ENCODE measurements at regions of chr17 and their contacts with region 1.

Region 1: GRCh38 chr17:56020369-56020768 is 132.9 kb upstream of the ANKFN1 start:
- DNase-seq: no peak
- ATAC-seq: peak; percentile 80
- H3K4me3 Mint-ChIP-seq: no peak overlapping the region
- H3K27ac Mint-ChIP-seq: peak overlapping the region; percentile 48
- H3K4me1 Mint-ChIP-seq: peaks cover 40% of the 10 kb centered on the region
- H3K27me3 Mint-ChIP-seq: peaks cover 9% of the 10 kb centered on the region

Region 2: DNA sequence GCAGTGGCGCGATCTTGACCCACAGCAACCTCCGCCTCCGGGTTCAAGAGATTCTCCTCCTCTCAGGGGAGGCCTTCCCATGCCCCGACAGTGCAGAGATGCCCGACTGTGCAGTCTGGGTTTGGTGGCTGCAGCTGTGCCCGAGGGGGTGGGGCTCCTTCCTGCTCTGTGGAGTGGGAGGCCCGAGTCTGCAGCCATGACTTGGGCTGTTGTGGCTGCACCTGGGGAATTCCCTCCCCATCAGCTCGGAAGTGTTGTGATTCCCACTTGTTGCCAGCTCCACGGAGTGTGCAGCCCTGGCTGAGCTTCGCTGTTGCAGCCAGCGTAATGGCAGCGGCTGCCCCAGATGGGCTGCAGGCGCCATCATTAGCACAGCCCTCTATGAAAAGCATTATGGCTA is 442.7 kb before region 1 on chr17:
- CTCF ChIA-PET with region 1: no interaction called
- POLR2A ChIA-PET with region 1: no interaction called
- intact Hi-C with region 1: no loop called
- DNase-seq: peak; percentile 67
- ATAC-seq: peak; percentile 16
- H3K4me3 Mint-ChIP-seq: no peak overlapping the region
- H3K27ac Mint-ChIP-seq: no peak overlapping the region
- H3K4me1 Mint-ChIP-seq: peaks cover 24% of the 10 kb centered on the region
- H3K27me3 Mint-ChIP-seq: peaks cover 7% of the 10 kb centered on the region

Region 3: DNA sequence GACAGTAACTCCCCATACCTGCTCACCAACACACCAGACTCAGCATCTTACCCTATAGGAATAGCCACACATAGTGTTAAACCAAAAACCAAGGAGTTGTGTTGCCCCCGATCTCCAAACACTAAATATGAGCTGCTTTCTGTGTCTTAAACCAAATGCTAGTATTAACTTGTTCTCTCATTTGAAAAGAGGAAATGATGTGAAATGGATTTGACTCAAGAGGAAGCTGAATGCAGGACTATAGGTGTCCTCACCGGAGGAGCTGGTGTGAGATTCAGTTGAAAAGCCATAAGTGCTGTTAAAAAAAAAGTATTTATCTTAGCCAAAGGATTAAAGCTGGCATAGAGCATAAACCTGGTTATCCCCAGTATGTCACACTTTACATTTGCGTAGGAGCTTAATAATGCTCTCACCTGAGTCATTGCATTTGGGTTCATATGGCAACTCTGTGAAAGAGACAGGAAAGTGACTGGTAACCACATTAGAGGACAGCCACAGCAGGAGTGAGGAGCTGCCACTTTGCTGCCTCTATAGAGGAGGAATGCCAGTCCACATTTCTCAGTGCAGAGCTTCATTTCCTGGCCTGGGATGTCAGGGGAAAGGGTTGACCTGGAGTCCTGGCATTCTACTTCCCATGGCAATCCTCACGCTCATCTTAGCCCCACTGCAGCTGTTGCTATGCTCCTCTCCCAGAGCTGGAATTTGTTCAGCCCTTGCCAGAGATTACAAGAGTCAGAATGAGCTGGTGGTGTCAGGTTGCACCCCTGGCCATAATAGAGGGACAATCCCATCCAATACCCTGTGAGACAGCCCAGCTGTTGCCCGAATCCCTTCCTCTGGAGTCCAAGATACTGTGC is 10.3 kb before region 1 on chr17:
- CTCF ChIA-PET with region 1: no interaction called
- POLR2A ChIA-PET with region 1: no interaction called
- intact Hi-C with region 1: loop called in 1 of 2 experiments (anchors 1 kb)
- DNase-seq: peak; percentile 30
- ATAC-seq: peak; percentile 85
- H3K4me3 Mint-ChIP-seq: no peak overlapping the region
- H3K27ac Mint-ChIP-seq: no peak overlapping the region
- H3K4me1 Mint-ChIP-seq: peaks cover 23% of the 10 kb centered on the region
- H3K27me3 Mint-ChIP-seq: no peaks in the 10 kb centered on the region

Region 4: DNA sequence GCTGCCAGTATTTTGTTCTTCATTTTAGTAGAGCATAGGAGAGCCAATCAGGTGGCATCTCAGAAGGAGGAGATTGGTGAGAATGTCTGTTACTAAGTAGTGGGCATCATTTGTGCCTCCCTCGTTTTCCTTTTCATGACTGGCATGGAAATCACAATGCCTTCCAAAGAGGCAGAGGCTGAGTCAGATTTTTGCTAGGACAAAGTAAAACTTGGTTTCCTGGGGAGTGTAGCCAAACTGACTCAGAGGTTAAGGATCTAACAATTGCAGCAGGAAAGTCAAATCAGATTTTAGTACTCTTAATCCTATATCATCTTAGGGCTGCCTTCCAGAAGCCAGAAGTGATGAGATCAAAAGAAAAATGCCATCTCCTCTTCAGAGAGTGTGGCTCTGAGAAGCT is 271.6 kb after region 1 on chr17:
- CTCF ChIA-PET with region 1: no interaction called
- POLR2A ChIA-PET with region 1: no interaction called
- intact Hi-C with region 1: loop called in 1 of 2 experiments (anchors 5 kb)
- DNase-seq: no peak
- ATAC-seq: no peak
- H3K4me3 Mint-ChIP-seq: no peak overlapping the region
- H3K27ac Mint-ChIP-seq: no peak overlapping the region
- H3K4me1 Mint-ChIP-seq: peaks cover 26% of the 10 kb centered on the region
- H3K27me3 Mint-ChIP-seq: no peaks in the 10 kb centered on the region

Region 5: GRCh38 chr17:57211543-57211942 is 1191.2 kb after region 1 on chr17:
- CTCF ChIA-PET with region 1: no interaction called
- POLR2A ChIA-PET with region 1: no interaction called
- intact Hi-C with region 1: no loop called
- DNase-seq: no peak
- ATAC-seq: no peak
- H3K4me3 Mint-ChIP-seq: no peak overlapping the region
- H3K27ac Mint-ChIP-seq: no peak overlapping the region
- H3K4me1 Mint-ChIP-seq: no peaks in the 10 kb centered on the region
- H3K27me3 Mint-ChIP-seq: peaks cover 4% of the 10 kb centered on the region